B cell (primary cell): ENCODE measurements at regions of chr21 and their contacts with region 1.

Region 1: GRCh38 chr21:32940079-32941014 is 85.4 kb upstream of the OLIG2 start:
- DNase-seq: peak; percentile 63
- ATAC-seq: no peak
- H3K4me3 ChIP-seq: no peak overlapping the region
- H3K4me3 Mint-ChIP-seq: no peak overlapping the region
- H3K27ac ChIP-seq: no peak overlapping the region
- H3K27ac Mint-ChIP-seq: no peak overlapping the region
- H3K4me1 ChIP-seq: no peaks in the 10 kb centered on the region
- H3K4me1 Mint-ChIP-seq: no peaks in the 10 kb centered on the region
- H3K27me3 ChIP-seq: peaks cover 0 to 14% (median 2%) of the 10 kb centered on the region in 4 experiments
- H3K27me3 Mint-ChIP-seq: peaks cover 24% of the 10 kb centered on the region
- CTCF ChIP-seq: peak; percentile 85

Region 2: DNA sequence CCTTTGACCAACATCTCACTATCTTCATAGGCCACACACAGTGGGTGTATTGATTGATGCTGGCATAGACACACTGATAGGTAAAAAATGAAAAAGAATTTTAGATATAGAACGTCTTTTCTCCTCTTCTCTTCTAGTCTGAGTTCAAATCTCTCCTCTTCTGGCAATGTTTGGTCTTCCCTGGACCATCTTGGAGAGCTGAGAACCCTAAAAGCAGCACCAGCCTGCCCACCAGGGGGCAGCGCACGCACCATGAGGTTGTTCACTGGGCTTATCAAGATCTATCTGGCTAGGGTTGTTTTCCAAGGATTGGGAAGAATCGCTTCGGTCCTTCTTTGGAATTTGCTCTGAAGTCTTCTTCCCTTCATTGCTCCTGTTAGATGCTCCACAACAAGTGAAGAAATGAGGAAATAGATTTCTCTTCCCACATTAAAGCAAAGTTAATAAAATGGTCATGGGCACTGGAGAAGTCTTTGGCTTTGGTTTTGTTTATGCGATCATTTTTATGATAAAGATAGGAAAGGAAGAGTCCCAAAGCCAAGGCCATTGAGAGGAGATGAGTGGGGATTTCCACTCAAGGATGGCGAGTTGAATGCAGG is 18.6 kb before region 1 on chr21:
- CTCF ChIA-PET with region 1: interaction called, 21 read pairs
- POLR2A ChIA-PET with region 1: no interaction called
- intact Hi-C with region 1: no loop called
- DNase-seq: peak; percentile 58
- ATAC-seq: no peak
- H3K4me3 ChIP-seq: no peak overlapping the region
- H3K4me3 Mint-ChIP-seq: no peak overlapping the region
- H3K27ac ChIP-seq: no peak overlapping the region
- H3K27ac Mint-ChIP-seq: no peak overlapping the region
- H3K4me1 ChIP-seq: no peaks in the 10 kb centered on the region
- H3K4me1 Mint-ChIP-seq: no peaks in the 10 kb centered on the region
- H3K27me3 ChIP-seq: peaks cover 0 to 5% (median 2%) of the 10 kb centered on the region in 4 experiments
- H3K27me3 Mint-ChIP-seq: peaks cover 32% of the 10 kb centered on the region
- CTCF ChIP-seq: peak; percentile 77

Region 3: GRCh38 chr21:32978341-32979270 is 38.3 kb after region 1 on chr21:
- CTCF ChIA-PET with region 1: no interaction called
- POLR2A ChIA-PET with region 1: no interaction called
- intact Hi-C with region 1: no loop called
- DNase-seq: no peak
- ATAC-seq: no peak
- H3K4me3 ChIP-seq: no peak overlapping the region
- H3K4me3 Mint-ChIP-seq: no peak overlapping the region
- H3K27ac ChIP-seq: no peak overlapping the region
- H3K27ac Mint-ChIP-seq: no peak overlapping the region
- H3K4me1 ChIP-seq: no peaks in the 10 kb centered on the region
- H3K4me1 Mint-ChIP-seq: no peaks in the 10 kb centered on the region
- H3K27me3 ChIP-seq: peaks cover 0 to 26% (median 1%) of the 10 kb centered on the region in 4 experiments
- H3K27me3 Mint-ChIP-seq: peaks cover 39% of the 10 kb centered on the region
- CTCF ChIP-seq: no peak